Activated B cell treated with CpG ODN at 0.5 μM for 24 hours (primary cell): ENCODE measurements at regions of chr16 and their contacts with region 1.

Region 1: GRCh38 chr16:56931892-56932720 is at the start of gene HERPUD1:
- DNase-seq: peak; percentile 98
- ATAC-seq: peak; percentile 79
- H3K4me3 Mint-ChIP-seq: peak within 1 kb of the TSS; percentile 97
- H3K27ac Mint-ChIP-seq: peak within 1 kb of the TSS; percentile 95
- H3K4me1 Mint-ChIP-seq: peaks cover 61% of the 10 kb centered on the region
- H3K27me3 Mint-ChIP-seq: no peaks in the 10 kb centered on the region
- CTCF ChIP-seq: no peak
- total RNA-seq, gene HERPUD1: 766 and 820 TPM in 2 replicates

Region 2: GRCh38 chr16:56425439-56425832 is 506.7 kb before region 1 on chr16 and contains the start of gene AMFR:
- CTCF ChIA-PET with region 1: no interaction called
- POLR2A ChIA-PET with region 1: no interaction called
- intact Hi-C with region 1: loop called (anchors 10 kb)
- DNase-seq: peak; percentile 82
- ATAC-seq: peak; percentile 87
- H3K4me3 Mint-ChIP-seq: peak within 1 kb of the TSS; percentile 96
- H3K27ac Mint-ChIP-seq: peak within 1 kb of the TSS; percentile 95
- H3K4me1 Mint-ChIP-seq: peaks cover 44% of the 10 kb centered on the region
- H3K27me3 Mint-ChIP-seq: no peaks in the 10 kb centered on the region
- CTCF ChIP-seq: no peak
- total RNA-seq, gene AMFR: 118 and 134 TPM in 2 replicates

Region 3: GRCh38 chr16:56866943-56867830 is 64.9 kb before region 1 on chr16:
- CTCF ChIA-PET with region 1: interaction called, 57 read pairs
- POLR2A ChIA-PET with region 1: interaction called, 444 read pairs
- intact Hi-C with region 1: loop called (anchors 1 kb)
- DNase-seq: no peak
- ATAC-seq: no peak
- H3K4me3 Mint-ChIP-seq: peak overlapping the region; percentile 24
- H3K27ac Mint-ChIP-seq: peak overlapping the region; percentile 69
- H3K4me1 Mint-ChIP-seq: peaks cover 46% of the 10 kb centered on the region
- H3K27me3 Mint-ChIP-seq: no peaks in the 10 kb centered on the region
- CTCF ChIP-seq: no peak

Region 4: GRCh38 chr16:56898847-56899246 is 33.3 kb before region 1 on chr16:
- CTCF ChIA-PET with region 1: no interaction called
- POLR2A ChIA-PET with region 1: interaction called, 10 read pairs
- intact Hi-C with region 1: no loop called
- DNase-seq: no peak
- ATAC-seq: peak; percentile 37
- H3K4me3 Mint-ChIP-seq: no peak overlapping the region
- H3K27ac Mint-ChIP-seq: peak overlapping the region; percentile 67
- H3K4me1 Mint-ChIP-seq: peaks cover 30% of the 10 kb centered on the region
- H3K27me3 Mint-ChIP-seq: no peaks in the 10 kb centered on the region
- CTCF ChIP-seq: no peak

Region 5: DNA sequence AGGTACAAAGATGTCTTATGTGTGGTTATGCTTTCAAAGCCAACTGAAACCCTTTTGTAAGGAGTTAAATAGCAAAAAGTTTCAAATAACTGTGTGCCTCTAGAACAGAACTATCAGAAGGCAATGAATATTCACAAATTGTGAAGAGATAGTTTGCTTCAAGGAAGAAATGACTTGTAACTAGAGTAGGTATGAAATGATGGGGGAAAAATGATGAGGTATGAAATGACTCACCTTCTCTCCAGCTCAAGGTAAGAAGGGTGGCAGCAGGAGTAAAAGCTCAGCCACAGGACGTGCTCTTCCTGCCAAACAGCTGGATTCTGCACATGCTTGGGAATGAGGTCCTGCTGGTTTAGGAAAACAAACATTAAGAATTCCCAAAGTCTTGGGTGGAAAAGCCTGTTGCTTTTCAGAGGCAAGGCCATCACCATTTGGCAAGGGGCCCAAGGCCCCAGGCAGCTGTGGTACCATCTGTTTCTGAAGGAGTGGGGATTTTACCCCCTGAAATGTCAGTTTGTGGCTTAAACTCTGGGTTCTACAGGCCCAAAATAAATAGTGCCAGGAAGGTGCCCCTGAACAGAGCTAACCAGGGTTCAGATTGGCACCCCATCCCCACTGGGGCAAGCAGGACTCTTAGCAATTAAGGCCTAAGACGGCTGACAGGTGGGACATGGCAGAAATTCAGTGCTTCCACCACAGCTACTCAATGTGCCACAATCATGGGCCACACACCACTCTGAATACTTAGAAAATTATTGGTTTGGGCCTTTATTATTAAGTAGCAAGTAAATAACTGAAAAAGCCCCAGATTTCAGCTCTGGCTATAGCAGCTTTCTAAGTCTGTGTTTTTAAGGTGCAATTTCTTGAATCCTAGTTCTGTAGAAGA is 13.1 kb after region 1 on chr16:
- CTCF ChIA-PET with region 1: no interaction called
- POLR2A ChIA-PET with region 1: interaction called, 795 read pairs
- intact Hi-C with region 1: loop called (anchors 1 kb)
- DNase-seq: no peak
- ATAC-seq: no peak
- H3K4me3 Mint-ChIP-seq: no peak overlapping the region
- H3K27ac Mint-ChIP-seq: peak overlapping the region; percentile 71
- H3K4me1 Mint-ChIP-seq: peaks cover 69% of the 10 kb centered on the region
- H3K27me3 Mint-ChIP-seq: no peaks in the 10 kb centered on the region
- CTCF ChIP-seq: no peak

Region 6: GRCh38 chr16:57024894-57025680 is 93.0 kb after region 1 on chr16:
- CTCF ChIA-PET with region 1: no interaction called
- POLR2A ChIA-PET with region 1: interaction called, 10 read pairs
- intact Hi-C with region 1: no loop called
- DNase-seq: no peak
- ATAC-seq: no peak
- H3K4me3 Mint-ChIP-seq: no peak overlapping the region
- H3K27ac Mint-ChIP-seq: no peak overlapping the region
- H3K4me1 Mint-ChIP-seq: peaks cover 31% of the 10 kb centered on the region
- H3K27me3 Mint-ChIP-seq: no peaks in the 10 kb centered on the region
- CTCF ChIP-seq: no peak